Left cardiac atrium (tissue), 4 donors: ENCODE measurements at regions of chr12 and their contacts with region 1.

Region 1: DNA sequence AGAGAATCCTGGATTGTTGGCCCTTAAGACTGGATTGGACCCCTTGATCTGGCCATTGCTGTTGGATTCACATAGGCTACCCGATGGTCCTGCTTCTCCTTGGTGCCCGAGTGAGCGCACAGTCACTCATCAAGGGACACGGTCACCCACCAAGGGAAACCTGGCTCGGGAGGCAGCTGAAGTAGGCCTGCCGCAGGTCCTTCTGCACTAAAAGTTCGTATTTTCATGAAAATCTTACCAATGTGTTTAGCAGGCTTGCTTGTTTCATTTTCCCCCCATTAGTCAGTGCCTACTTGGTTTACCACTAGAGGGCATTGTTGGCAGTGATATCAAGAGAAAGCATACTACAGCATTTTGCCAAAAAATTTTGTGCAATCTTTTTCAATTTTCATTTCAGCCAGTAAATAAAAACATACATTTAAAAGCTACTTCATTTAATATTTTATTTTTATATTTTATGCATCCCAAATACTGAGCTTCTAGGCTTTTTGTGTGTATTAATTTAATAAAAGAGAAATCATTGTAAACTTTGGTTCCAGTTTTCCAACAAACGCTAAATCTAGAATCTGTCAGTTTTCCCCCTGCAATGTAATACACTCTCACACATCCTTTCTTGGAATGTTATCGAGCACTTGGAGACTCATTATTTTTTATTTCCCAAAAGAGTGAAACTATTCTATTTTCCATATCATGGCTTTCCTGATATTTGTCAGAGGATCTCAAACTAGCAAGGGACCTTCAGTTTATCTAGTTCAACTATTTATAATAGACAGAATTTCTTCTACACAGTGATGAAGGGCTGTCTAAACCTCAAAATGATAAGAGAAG is 116.7 kb downstream of the LMNTD1 start:
- DNase-seq: no peak
- ATAC-seq: peak; percentile 74 to 84

Region 2: DNA sequence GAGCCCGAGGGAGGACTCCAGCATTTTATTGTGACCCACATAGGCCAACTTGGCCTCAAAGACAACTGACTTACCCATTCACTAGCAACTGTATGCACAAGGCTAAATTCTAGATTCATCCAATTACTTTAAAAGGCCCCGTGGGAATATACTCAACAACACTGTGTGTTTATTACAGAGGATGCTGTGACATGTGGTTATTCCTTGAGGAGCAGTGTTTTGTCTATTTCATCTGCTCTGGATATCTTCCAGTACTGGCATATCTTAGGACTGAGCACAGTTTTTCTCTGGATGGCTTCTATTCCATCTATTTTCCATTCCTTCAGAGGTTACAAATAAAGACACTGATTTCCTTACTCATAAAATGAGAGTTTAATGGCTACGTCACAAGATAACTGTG is 98.5 kb before region 1 on chr12:
- intact Hi-C with region 1: no loop called
- DNase-seq: no peak
- ATAC-seq: no peak

Region 3: GRCh38 chr12:25557830-25558436 is 121.5 kb after region 1 on chr12:
- intact Hi-C with region 1: loop called in 1 of 2 experiments (anchors 5 kb)
- DNase-seq: no peak
- ATAC-seq: no peak

Region 4: GRCh38 chr12:26028953-26029735 is 592.7 kb after region 1 on chr12:
- intact Hi-C with region 1: loop called in 1 of 2 experiments (anchors 5 kb)
- DNase-seq: no peak
- ATAC-seq: peak; percentile 64 to 74

Region 5: DNA sequence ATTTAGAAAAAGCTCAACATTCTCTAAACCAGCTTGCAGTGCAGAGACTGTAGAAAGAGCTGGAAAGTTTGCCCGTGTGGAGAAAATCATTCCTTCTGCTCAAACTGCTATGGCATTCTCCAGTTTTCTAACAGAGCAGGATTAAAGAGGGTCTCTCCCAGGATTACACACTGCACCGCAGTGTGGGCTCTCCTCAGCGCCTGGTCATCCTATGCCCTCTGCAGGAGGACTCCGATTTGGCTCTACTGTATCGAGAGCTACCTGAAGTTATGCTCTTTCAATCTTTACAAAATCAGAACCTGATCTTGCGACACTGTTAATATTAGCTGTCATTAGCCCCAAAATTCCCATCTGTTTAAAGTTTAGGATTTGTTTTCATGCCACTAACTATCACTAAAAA is 655.4 kb after region 1 on chr12:
- intact Hi-C with region 1: loop called in 1 of 2 experiments (anchors 5 kb)
- DNase-seq: no peak
- ATAC-seq: peak; percentile 83 to 85